PC-9 (cell line): ENCODE measurements at regions of chr13 and their contacts with region 1.

Region 1: DNA sequence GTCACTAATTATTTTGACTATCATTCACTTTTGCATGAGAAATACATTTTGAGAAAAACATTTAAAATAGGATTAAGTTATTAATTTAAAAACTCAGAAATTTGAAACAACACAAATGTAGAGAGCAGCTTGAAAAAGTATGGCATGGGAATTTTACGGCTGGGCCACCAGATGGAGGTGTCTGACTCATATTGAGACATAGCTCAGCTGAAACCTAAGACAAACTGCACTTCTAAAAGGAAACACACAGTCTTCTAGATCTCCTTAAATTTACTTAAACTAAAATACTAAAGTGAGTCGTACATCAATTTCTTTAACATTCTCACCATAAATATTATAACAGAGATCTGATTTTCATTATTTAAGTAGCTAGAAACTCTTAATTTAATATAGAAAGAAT is 41.9 kb upstream of the POSTN start:
- DNase-seq: peak in 1 of 2 experiments; percentile 7
- H3K4me3 ChIP-seq: no peak overlapping the region
- H3K27ac ChIP-seq: no peak overlapping the region
- H3K4me1 ChIP-seq: no peaks in the 10 kb centered on the region
- H3K27me3 ChIP-seq: no peaks in the 10 kb centered on the region
- CTCF ChIP-seq: peak; percentile 69

Region 2: DNA sequence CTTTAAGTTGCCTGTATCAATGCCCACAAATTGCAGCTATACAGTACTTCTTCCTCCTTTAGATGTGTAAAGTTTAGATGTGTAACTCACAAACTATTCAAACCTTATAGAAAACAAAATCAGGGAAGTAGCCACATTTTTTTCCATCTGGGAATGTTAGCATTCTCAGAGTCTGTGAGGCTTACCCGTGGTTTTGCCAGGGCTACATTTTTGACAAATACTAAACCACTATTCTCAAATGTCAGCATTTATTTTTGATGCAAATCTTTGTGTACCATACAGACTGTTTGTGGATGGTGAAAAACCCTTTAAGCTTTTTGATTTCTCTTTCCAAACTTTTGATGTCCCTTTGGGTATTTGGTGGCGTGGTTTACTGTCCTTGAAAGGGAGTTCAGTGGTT is 258.4 kb before region 1 on chr13:
- CTCF ChIA-PET with region 1: no interaction called
- POLR2A ChIA-PET with region 1: interaction called, 28 read pairs
- intact Hi-C with region 1: no loop called
- DNase-seq: no peak
- H3K4me3 ChIP-seq: no peak overlapping the region
- H3K27ac ChIP-seq: no peak overlapping the region
- H3K4me1 ChIP-seq: no peaks in the 10 kb centered on the region
- H3K27me3 ChIP-seq: no peaks in the 10 kb centered on the region
- CTCF ChIP-seq: no peak

Region 3: DNA sequence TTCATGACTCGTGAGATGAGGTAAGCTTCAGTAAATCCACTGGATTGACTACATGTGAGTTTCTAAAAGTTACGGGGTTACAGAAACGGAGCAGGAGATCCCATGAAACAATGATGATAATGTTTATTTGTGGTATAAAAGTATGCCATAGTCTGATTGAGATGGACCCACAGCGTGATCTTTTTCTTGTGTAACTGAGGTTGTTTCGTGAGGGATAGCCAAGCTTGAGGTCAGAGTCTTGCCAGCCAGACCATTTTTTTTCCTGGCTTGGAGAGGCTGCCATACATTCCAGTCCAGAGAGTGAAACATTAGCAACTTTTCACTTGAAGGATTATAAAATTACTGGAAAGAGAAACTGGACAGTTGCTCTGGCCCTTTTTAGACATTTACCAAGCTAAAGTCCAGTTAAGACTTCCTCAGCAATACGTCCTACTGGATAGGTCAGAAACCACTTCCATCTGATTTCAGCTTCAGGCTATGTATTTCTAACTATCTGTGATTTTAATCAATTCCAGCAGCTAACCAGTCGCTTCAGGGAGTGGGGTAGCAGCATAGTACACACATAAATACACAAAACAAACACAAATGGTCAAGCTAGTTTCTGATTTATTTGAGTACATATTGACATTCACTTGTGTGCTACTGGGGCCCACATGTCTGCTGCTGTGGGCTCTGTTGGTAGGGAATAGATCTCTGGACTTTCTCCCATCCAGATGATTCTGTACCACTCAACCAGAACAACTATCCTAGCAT is 236.5 kb before region 1 on chr13:
- CTCF ChIA-PET with region 1: no interaction called
- POLR2A ChIA-PET with region 1: no interaction called
- intact Hi-C with region 1: no loop called
- DNase-seq: no peak
- H3K4me3 ChIP-seq: no peak overlapping the region
- H3K27ac ChIP-seq: no peak overlapping the region
- H3K4me1 ChIP-seq: no peaks in the 10 kb centered on the region
- H3K27me3 ChIP-seq: no peaks in the 10 kb centered on the region
- CTCF ChIP-seq: no peak

Region 4: DNA sequence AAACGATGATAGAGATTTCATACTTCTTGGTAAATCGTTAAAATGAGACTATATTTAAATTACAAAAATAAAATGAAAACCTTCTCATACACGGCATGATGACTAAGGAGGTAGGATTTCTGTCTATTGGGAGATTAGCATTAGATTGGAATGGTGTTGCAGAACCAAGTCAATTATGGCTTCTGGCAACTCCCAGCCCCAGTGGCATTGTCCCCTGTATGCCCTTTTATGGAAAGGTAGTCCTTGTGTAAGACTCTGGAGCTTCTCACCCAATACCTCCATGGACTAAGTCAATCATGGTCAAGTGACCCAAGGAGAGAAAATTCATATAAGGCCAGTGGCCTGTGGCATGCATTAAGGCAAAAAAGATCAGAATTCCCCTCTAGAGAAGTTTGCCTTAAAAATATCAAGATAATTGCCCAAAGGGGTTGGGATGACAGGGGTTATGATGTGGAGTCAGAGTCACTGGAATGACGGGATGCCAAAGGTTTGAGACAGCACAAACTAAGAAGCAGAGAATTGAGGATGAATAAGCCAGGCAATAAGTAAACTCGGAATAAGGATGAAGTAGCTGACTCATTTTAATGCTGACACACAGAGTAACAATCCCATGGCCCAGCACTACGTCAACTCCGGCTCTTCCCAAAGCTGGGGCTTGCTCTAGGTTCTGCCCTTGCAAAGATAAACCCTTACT is 15.9 kb after region 1 on chr13:
- CTCF ChIA-PET with region 1: no interaction called
- POLR2A ChIA-PET with region 1: no interaction called
- intact Hi-C with region 1: no loop called
- DNase-seq: peak; percentile 51 to 88
- H3K4me3 ChIP-seq: no peak overlapping the region
- H3K27ac ChIP-seq: peak overlapping the region; percentile 79
- H3K4me1 ChIP-seq: peaks cover 22% of the 10 kb centered on the region
- H3K27me3 ChIP-seq: no peaks in the 10 kb centered on the region
- CTCF ChIP-seq: no peak

Region 5: DNA sequence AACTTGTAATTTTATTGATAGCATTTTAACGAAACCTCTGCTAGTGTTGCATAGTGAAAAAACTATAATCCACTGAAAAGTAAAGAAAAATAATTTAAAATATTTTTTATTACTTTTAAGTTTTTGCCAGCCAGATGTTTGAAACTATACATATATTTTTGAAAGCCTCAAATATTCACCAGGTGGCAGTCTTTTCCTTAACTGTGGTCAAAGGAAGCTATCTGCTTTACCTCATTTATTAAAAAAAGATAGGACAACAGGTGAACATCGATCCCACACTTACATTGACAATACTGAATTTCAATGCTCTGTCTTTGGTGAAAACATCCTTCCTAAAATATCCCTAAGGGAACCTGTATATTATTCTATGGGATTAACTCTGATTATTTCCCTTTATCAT is 128.6 kb after region 1 on chr13:
- CTCF ChIA-PET with region 1: no interaction called
- POLR2A ChIA-PET with region 1: no interaction called
- intact Hi-C with region 1: loop called (anchors 5 kb)
- DNase-seq: no peak
- H3K4me3 ChIP-seq: no peak overlapping the region
- H3K27ac ChIP-seq: no peak overlapping the region
- H3K4me1 ChIP-seq: no peaks in the 10 kb centered on the region
- H3K27me3 ChIP-seq: no peaks in the 10 kb centered on the region
- CTCF ChIP-seq: peak; percentile 59

Region 6: DNA sequence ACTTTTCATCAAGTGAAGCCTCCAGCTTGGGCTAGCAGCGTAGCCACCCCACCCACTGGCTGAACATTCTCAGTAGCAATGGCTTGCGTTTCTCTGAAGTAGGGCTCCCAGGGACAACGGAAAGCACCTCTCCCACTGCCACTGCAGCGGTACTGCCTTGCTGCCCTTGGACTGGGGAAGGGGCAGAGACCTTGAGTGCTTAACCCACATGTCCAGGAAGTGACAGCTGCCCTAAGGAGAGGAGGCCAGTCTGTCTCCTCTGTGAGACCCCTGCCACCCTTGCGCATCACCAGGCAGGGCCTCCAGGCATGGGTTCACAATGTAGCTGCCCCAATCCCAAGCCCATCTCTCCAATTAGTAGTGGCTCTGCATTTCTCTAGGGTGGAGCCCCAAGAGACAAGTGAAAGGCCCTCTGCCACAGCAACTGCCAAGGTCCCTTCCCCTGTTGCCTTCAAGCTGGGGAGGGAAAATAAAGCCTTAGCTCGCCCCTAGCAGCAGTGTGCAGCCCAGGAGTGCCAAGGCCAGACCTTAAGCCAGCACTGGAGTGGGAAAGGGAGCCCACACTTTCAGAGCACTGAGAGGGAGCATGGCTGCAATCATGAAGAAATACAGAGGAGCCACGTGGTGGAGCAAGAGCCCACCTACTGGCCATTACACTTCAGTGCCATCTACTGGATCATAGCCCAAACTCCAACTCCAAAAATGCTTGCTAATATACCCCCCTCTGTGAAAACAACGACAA is 405.0 kb after region 1 on chr13:
- CTCF ChIA-PET with region 1: no interaction called
- POLR2A ChIA-PET with region 1: no interaction called
- intact Hi-C with region 1: loop called (anchors 5 kb)
- DNase-seq: peak in 1 of 2 experiments; percentile 0
- H3K4me3 ChIP-seq: no peak overlapping the region
- H3K27ac ChIP-seq: no peak overlapping the region
- H3K4me1 ChIP-seq: no peaks in the 10 kb centered on the region
- H3K27me3 ChIP-seq: no peaks in the 10 kb centered on the region
- CTCF ChIP-seq: peak; percentile 61; the same call in 1 of the 2 replicates

Region 7: DNA sequence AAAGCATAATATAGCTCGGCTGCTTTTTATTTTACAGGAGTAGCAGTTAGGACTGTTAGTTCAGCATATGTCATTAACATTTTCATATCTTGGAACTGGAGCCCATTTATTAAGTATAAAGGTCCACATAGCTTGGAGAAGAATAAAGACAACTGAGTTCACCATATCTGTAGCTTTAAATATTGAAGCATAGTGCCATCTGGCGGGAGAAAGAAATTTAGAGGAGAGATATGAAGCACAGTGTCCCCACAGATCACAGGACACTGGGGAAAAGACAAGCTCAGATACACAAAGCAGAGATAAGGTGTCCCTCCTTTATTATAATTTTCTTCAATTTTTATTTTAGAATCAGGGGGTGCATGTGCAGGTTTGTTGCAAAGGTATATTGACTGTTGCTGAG is 941.6 kb after region 1 on chr13:
- CTCF ChIA-PET with region 1: interaction called, 3 read pairs
- POLR2A ChIA-PET with region 1: no interaction called
- intact Hi-C with region 1: loop called (anchors 5 kb)
- DNase-seq: peak; percentile 10 to 39
- H3K4me3 ChIP-seq: no peak overlapping the region
- H3K27ac ChIP-seq: no peak overlapping the region
- H3K4me1 ChIP-seq: no peaks in the 10 kb centered on the region
- H3K27me3 ChIP-seq: no peaks in the 10 kb centered on the region
- CTCF ChIP-seq: peak; percentile 66